ENCODE measurements at regions of chr17 and their contacts with region 1.

Region 1: DNA sequence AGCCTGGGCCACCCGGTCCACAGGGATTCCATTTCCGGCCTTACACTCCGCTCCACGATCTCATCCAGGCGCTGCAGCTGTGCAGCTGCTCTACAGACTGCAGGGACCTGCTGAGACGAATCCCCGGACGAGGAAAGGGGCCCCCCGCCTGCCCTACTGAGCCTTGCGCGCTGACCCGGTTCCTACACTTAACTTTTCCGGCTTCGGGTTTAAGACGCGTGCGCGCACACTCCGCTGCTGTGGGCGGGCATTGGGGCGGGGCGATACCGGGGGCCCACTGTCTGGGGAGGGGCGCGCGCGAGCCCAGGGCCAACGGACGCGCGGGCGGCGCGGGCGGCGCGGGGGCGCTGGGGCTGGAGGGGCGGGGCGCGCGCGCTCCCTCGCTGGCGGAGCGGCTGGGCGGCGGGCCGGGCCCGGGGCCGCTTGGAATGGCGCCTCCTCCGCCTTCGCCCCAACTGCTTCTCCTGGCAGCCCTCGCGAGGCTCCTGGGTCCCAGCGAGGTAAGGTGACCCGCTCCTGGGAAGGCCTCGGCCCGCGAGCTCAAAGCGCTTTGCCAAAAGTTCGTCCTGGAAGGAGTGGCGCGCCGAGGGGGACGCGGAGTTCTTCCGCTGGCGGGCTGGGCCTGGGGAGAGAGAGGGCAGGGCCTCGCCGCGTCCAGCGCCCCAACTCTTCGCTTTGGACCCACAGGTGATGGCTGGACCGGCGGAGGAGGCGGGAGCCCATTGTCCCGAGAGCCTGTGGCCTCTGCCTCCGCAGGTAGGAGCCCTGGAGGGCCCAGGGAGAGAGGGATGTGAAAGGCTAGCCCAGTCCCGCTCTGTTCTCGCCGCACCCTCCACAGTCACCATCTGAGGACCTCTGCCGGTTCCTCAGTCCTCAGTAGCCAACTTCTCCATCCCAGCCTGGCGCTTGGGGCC is at the start of gene TP53I13:
- DNase-seq: peak; percentile 71 to 95 (median 91)
- ATAC-seq: peak; percentile 57
- H3K4me3 ChIP-seq: peak within 1 kb of the TSS; percentile 66 to 94
- H3K4me3 Mint-ChIP-seq: peak within 1 kb of the TSS; percentile 94
- H3K27ac ChIP-seq: peak within 1 kb of the TSS; percentile 53 to 78
- H3K27ac Mint-ChIP-seq: peak within 1 kb of the TSS; percentile 86
- H3K4me1 ChIP-seq: peaks cover 30% of the 10 kb centered on the region
- H3K4me1 Mint-ChIP-seq: peaks cover 41% of the 10 kb centered on the region
- H3K27me3 ChIP-seq: no peaks in the 10 kb centered on the region
- H3K27me3 Mint-ChIP-seq: no peaks in the 10 kb centered on the region
- CTCF ChIP-seq: no peak
- total RNA-seq, gene TP53I13: 50.2 to 54.1 TPM

Region 2: GRCh38 chr17:29148790-29149430 is 419.7 kb before region 1 on chr17:
- CTCF ChIA-PET with region 1: no interaction called
- POLR2A ChIA-PET with region 1: no interaction called
- intact Hi-C with region 1: loop called in 1 of 2 experiments (anchors 10 kb)
- DNase-seq: peak; percentile 82 to 95 (median 91)
- ATAC-seq: peak; percentile 97
- H3K4me3 ChIP-seq: peak overlapping the region; percentile 54 to 56
- H3K4me3 Mint-ChIP-seq: peak overlapping the region; percentile 76
- H3K27ac ChIP-seq: peak overlapping the region in 1 of 2 experiments; percentile 88
- H3K27ac Mint-ChIP-seq: peak overlapping the region; percentile 87
- H3K4me1 ChIP-seq: peaks cover 23% of the 10 kb centered on the region
- H3K4me1 Mint-ChIP-seq: peaks cover 33% of the 10 kb centered on the region
- H3K27me3 ChIP-seq: no peaks in the 10 kb centered on the region
- H3K27me3 Mint-ChIP-seq: no peaks in the 10 kb centered on the region
- CTCF ChIP-seq: peak; percentile 98

Region 3: GRCh38 chr17:29389982-29390850 is 178.4 kb before region 1 on chr17 and contains the start of gene TAOK1:
- CTCF ChIA-PET with region 1: interaction called, 3 read pairs
- POLR2A ChIA-PET with region 1: interaction called, 4 read pairs
- intact Hi-C with region 1: loop called (anchors 1 to 5 kb)
- DNase-seq: peak; percentile 94 to 99 (median 98)
- ATAC-seq: peak; percentile 91
- H3K4me3 ChIP-seq: peak within 1 kb of the TSS; percentile 77 to 85
- H3K4me3 Mint-ChIP-seq: peak within 1 kb of the TSS; percentile 93
- H3K27ac ChIP-seq: peak within 1 kb of the TSS; percentile 84 to 87
- H3K27ac Mint-ChIP-seq: peak within 1 kb of the TSS; percentile 98
- H3K4me1 ChIP-seq: peaks cover 22% of the 10 kb centered on the region
- H3K4me1 Mint-ChIP-seq: peaks cover 41% of the 10 kb centered on the region
- H3K27me3 ChIP-seq: no peaks in the 10 kb centered on the region
- H3K27me3 Mint-ChIP-seq: no peaks in the 10 kb centered on the region
- CTCF ChIP-seq: no peak
- total RNA-seq, gene TAOK1: 25.2 to 26.8 TPM

Region 4: DNA sequence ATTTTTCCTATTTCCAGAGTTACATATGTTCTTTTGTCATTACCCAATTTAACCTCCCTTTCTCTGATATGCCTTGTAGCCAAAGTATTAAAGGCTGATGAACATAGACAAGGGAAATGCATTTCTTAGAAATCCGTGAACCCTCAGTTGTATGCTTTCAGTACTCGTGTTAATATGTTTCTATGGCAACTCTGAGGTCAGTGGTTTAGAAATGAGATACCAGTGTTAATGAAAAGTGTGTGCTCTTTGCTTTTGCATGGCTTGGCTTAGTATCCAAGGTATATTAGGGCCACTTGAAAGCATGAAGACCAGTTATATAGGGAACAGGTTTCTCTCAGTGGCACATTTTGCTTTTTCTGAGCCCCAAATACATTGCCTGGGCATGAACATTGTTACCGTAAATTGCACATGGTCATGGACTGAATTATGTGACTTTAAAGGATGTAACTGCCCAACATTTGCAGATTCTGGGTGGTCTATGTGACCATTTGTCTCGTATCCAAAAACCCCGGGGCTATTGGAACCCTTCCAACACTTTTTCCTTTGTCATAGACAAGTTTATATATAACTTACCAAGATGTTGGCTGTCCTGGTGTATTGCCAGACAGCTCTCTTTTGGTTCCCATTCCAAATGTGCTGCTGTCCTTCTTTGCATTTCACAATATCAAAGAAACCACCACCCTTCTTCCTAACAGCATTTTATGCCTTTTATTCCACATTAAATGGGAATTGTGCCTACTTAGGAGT is 19.2 kb before region 1 on chr17:
- CTCF ChIA-PET with region 1: interaction called, 10 read pairs
- POLR2A ChIA-PET with region 1: interaction called, 5 read pairs
- intact Hi-C with region 1: no loop called
- DNase-seq: no peak
- ATAC-seq: no peak
- H3K4me3 ChIP-seq: no peak overlapping the region
- H3K4me3 Mint-ChIP-seq: no peak overlapping the region
- H3K27ac ChIP-seq: no peak overlapping the region
- H3K27ac Mint-ChIP-seq: no peak overlapping the region
- H3K4me1 ChIP-seq: no peaks in the 10 kb centered on the region
- H3K4me1 Mint-ChIP-seq: peaks cover 6% of the 10 kb centered on the region
- H3K27me3 ChIP-seq: no peaks in the 10 kb centered on the region
- H3K27me3 Mint-ChIP-seq: no peaks in the 10 kb centered on the region
- CTCF ChIP-seq: no peak

Region 5: DNA sequence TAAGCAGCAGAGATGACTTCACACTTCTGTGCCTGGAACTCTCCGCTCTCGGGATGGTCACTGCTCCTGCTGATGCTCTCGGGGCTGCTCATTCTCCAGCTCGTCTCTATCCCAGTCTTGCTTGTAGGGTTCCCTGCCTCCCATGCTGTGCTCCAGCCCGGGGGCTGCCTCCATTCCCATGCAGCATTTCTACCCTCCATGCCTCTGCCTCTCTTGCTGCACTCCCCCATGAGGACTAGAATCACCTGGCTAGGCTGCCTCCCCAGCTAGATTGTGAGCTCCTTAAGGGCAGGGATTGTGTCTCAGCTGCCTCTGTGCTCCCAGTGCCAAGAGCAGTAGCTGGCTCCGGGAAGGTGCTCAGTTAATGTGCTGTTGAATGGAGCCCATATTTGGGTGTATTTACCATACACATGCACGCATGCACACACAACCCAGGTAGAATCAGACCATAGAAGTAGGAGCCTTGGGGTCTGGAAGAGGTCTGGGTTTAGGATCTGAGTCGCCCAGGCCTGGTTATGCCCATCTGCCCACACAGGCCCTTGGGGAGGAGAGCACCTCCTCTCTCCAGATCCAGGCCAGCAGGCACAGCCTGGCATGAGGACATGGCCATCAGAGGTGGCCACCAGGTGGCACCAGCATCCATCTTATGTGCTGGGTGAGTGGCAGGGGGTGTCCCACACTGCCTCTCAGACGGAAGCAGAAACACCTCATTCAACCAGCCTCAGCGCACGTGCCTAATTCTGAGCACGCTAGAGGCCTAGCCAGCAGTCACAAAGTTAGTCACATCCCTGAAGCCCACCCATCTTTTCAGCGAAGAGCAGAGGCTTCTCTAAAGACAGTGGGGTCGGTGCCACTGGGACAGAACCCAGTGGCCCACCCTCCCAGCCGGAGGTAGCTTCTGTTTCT is 11.5 kb after region 1 on chr17:
- CTCF ChIA-PET with region 1: interaction called, 112 read pairs
- POLR2A ChIA-PET with region 1: interaction called, 3 read pairs
- intact Hi-C with region 1: loop called in 1 of 2 experiments (anchors 1 kb)
- DNase-seq: peak; percentile 81 to 95 (median 92)
- ATAC-seq: peak; percentile 99
- H3K4me3 ChIP-seq: no peak overlapping the region
- H3K4me3 Mint-ChIP-seq: no peak overlapping the region
- H3K27ac ChIP-seq: no peak overlapping the region
- H3K27ac Mint-ChIP-seq: peak overlapping the region; percentile 34
- H3K4me1 ChIP-seq: peaks cover 13% of the 10 kb centered on the region
- H3K4me1 Mint-ChIP-seq: peaks cover 11% of the 10 kb centered on the region
- H3K27me3 ChIP-seq: no peaks in the 10 kb centered on the region
- H3K27me3 Mint-ChIP-seq: no peaks in the 10 kb centered on the region
- CTCF ChIP-seq: peak; percentile 80

Region 6: GRCh38 chr17:29589524-29590410 is 21.2 kb after region 1 on chr17 and contains the start of gene GIT1:
- CTCF ChIA-PET with region 1: interaction called, 112 read pairs
- POLR2A ChIA-PET with region 1: interaction called, 18 read pairs
- intact Hi-C with region 1: loop called (anchors 1 kb)
- DNase-seq: peak; percentile 59 to 93 (median 83)
- ATAC-seq: peak; percentile 86
- H3K4me3 ChIP-seq: peak within 1 kb of the TSS; percentile 73 to 75
- H3K4me3 Mint-ChIP-seq: peak within 1 kb of the TSS; percentile 93
- H3K27ac ChIP-seq: peak within 1 kb of the TSS; percentile 18 to 64
- H3K27ac Mint-ChIP-seq: peak within 1 kb of the TSS; percentile 89
- H3K4me1 ChIP-seq: peaks cover 78% of the 10 kb centered on the region
- H3K4me1 Mint-ChIP-seq: peaks cover 59% of the 10 kb centered on the region
- H3K27me3 ChIP-seq: no peaks in the 10 kb centered on the region
- H3K27me3 Mint-ChIP-seq: no peaks in the 10 kb centered on the region
- CTCF ChIP-seq: no peak
- total RNA-seq, gene GIT1: 25.8 to 27.0 TPM

Region 7: DNA sequence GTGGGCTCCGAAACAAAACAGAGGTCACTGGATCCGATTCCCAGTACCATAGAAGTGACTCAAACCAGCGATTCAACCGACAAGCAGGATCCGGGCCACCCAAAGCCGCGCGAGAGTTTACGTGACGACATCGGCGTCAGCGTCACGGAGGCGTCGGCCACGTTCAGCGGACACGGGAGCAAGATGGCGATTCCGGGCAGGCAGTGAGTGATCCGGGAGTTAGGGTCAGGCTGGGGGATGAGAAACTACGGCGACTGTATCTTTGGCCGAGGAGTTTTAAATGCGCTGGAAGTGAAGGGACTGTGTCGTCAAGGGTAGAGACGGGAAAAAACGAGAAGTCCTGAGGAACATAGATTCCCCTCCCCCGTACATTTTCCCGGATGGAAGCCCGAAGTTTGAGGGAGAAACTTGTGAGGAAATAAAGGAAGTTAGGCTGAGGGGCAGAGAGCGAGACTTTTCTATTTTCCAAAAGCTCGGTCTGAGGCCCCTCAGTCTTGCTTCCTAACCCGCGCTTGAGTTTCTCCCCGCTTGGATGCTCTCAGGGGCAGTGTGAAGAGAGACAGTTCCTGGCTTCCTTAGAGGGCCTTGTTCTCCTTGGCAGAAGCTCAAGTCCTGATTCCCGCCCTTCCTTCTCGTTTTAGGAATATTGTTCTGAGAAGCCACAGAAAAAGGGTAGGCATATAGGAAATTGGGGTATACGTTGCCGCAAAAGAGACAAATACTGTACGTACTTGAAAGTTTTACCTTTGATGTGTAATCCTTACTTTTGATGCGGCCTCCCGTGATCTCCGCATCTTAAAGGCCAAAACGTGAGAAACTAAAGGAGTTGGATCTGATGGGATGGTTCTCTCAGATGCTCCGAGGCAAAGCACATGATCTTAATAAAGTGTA is 548.3 kb after region 1 on chr17 and contains the start of gene NSRP1:
- CTCF ChIA-PET with region 1: no interaction called
- POLR2A ChIA-PET with region 1: no interaction called
- intact Hi-C with region 1: loop called in 1 of 2 experiments (anchors 1 kb)
- DNase-seq: peak; percentile 83 to 96 (median 92)
- ATAC-seq: peak; percentile 97
- H3K4me3 ChIP-seq: peak within 1 kb of the TSS; percentile 66 to 96
- H3K4me3 Mint-ChIP-seq: peak within 1 kb of the TSS; percentile 100
- H3K27ac ChIP-seq: peak within 1 kb of the TSS; percentile 95 to 99
- H3K27ac Mint-ChIP-seq: peak within 1 kb of the TSS; percentile 100
- H3K4me1 ChIP-seq: peaks cover 16% of the 10 kb centered on the region
- H3K4me1 Mint-ChIP-seq: peaks cover 41% of the 10 kb centered on the region
- H3K27me3 ChIP-seq: no peaks in the 10 kb centered on the region
- H3K27me3 Mint-ChIP-seq: no peaks in the 10 kb centered on the region
- CTCF ChIP-seq: no peak
- total RNA-seq, gene NSRP1: 22.4 to 23.1 TPM

Measured in CD8-positive, alpha-beta T cell (primary cell).